Body of pancreas (tissue), 4 donors: ENCODE measurements at regions of chr11 and their contacts with region 1.

Region 1: GRCh38 chr11:75142714-75143419 is 8.0 kb upstream of the SLCO2B1 start:
- DNase-seq: peak in 3 of 4 donors; percentile 41 to 77 (median 44)
- ATAC-seq: no peak
- H3K4me3 ChIP-seq: no peak overlapping the region
- H3K27ac ChIP-seq: peak overlapping the region in 1 of 4 donors; percentile 36
- H3K4me1 ChIP-seq: no peaks in the 10 kb centered on the region
- H3K27me3 ChIP-seq: no peaks in the 10 kb centered on the region
- CTCF ChIP-seq: no peak
- POLR2A ChIP-seq: no peak

Region 2: DNA sequence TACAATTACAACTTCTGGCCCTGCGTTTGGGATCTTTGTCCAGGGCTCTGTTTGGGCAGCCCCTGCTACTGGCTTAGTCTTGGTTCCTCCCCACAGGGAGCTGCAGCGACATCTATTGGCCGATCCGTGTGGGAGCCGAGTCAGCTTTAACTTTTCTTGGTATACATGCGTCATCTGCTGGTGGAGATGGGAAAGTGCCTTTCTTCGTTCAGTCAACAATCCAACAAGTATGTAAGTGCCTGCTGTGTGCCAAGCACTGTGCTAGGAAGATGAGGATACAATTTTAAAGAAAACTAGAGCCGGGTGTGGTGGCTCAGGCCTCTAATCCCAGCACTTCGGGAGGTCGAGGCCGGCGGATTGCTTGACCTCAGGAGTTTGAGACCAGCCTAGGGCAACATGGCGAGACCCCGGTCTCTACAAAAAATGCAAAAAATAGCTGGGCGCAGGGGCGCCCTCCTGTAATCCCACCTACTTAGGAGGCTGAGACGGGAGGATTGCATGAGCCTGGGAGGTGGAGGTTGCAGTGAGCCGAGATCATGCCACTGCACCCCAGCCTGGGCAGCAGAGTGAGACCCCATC is 105.9 kb after region 1 on chr11:
- intact Hi-C with region 1: loop called (anchors 5 kb)
- DNase-seq: peak; percentile 89 to 91 (median 90)
- ATAC-seq: peak; percentile 90
- H3K4me3 ChIP-seq: no peak overlapping the region
- H3K27ac ChIP-seq: no peak overlapping the region
- H3K4me1 ChIP-seq: peaks cover 19% of the 10 kb centered on the region
- H3K27me3 ChIP-seq: no peaks in the 10 kb centered on the region
- CTCF ChIP-seq: peak; percentile 98 to 100 (median 100)
- POLR2A ChIP-seq: no peak